Heart left ventricle (tissue), 16 donors: ENCODE measurements at regions of chr15 and their contacts with region 1.

Region 1: DNA sequence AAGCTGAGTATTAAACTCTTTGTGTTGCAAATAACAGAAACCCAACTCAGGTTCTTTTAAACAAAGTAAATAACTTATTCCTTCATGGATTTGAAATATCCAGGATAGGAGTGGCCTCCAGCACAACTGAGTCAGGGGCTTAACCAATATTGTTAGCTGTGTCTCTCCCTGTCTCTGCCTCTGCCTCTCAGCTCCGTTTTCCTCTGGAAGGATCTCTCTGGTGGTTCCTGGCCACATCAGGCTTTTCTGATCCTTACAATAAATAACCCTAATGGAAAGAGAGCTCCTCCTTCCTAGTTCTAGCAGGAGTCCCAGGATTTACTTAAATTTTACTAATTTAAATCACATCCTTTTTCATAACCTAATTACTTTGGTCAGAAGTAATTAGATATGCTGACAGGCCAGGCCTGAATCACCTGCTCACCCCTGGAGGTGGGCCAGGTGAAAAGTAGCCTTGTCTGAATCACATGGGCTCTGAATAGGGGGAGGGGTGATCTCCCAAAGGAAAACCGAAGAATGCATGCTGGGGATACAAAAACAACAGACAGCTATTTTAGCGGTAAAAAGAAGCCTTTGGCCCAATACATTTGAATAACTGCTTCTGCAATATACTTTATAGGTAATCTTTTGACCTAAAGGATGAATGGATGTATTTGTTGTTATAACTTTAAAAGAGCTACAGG is 75.4 kb downstream of the REC114 start:
- DNase-seq: peak in 4 of 5 donors; percentile 18 to 50 (median 24)
- ATAC-seq: peak in 2 of 4 donors; percentile 54 to 63
- H3K4me3 ChIP-seq: no peak overlapping the region
- H3K27ac ChIP-seq: peak overlapping the region in 11 of 12 donors; percentile 21 to 79 (median 71)
- H3K4me1 ChIP-seq: peaks cover 0 to 23% (median 7%) of the 10 kb centered on the region in 12 donors
- H3K27me3 ChIP-seq: no peaks in the 10 kb centered on the region
- CTCF ChIP-seq: no peak
- POLR2A ChIP-seq: no peak

Region 2: GRCh38 chr15:73375755-73376305 is 142.5 kb before region 1 on chr15:
- intact Hi-C with region 1: loop called in 2 of 10 experiments (anchors 2 to 10 kb)
- DNase-seq: peak in 4 of 5 donors; percentile 38 to 81 (median 58)
- ATAC-seq: peak in 3 of 4 donors; percentile 45 to 60 (median 54)
- H3K4me3 ChIP-seq: no peak overlapping the region
- H3K27ac ChIP-seq: peak overlapping the region in 9 of 12 donors; percentile 39 to 77 (median 68)
- H3K4me1 ChIP-seq: peaks cover 0 to 23% (median 6%) of the 10 kb centered on the region in 12 donors
- H3K27me3 ChIP-seq: peaks cover 0 to 19% (median 0%) of the 10 kb centered on the region in 9 donors
- CTCF ChIP-seq: no peak
- POLR2A ChIP-seq: no peak

Region 3: DNA sequence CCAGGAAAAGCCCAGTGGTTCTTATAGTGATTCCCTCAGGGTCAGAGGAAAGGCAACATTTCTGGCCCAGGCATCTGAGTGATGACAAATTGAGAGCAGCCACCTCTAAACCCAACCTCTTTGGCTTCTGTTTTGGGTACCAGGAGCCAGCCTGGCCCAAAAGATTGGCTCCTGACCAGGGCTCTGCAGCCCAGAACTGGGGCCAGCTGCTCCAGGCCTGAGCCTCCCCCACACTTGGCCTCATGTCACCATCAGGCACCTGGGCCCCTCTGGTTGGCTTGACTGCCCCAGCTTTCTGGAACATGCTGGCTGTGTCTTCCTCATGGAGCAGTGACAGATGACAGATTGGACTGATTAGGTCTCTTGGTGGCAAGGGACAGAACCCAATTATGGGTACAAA is 123.5 kb before region 1 on chr15:
- intact Hi-C with region 1: loop called in 3 of 10 experiments (anchors 5 to 10 kb)
- DNase-seq: peak; percentile 73 to 84 (median 77)
- ATAC-seq: peak; percentile 94 to 97 (median 96)
- H3K4me3 ChIP-seq: no peak overlapping the region
- H3K27ac ChIP-seq: no peak overlapping the region
- H3K4me1 ChIP-seq: peaks cover 0 to 24% (median 7%) of the 10 kb centered on the region in 12 donors
- H3K27me3 ChIP-seq: peaks cover 0 to 8% (median 0%) of the 10 kb centered on the region in 9 donors
- CTCF ChIP-seq: no peak
- POLR2A ChIP-seq: no peak

Region 4: DNA sequence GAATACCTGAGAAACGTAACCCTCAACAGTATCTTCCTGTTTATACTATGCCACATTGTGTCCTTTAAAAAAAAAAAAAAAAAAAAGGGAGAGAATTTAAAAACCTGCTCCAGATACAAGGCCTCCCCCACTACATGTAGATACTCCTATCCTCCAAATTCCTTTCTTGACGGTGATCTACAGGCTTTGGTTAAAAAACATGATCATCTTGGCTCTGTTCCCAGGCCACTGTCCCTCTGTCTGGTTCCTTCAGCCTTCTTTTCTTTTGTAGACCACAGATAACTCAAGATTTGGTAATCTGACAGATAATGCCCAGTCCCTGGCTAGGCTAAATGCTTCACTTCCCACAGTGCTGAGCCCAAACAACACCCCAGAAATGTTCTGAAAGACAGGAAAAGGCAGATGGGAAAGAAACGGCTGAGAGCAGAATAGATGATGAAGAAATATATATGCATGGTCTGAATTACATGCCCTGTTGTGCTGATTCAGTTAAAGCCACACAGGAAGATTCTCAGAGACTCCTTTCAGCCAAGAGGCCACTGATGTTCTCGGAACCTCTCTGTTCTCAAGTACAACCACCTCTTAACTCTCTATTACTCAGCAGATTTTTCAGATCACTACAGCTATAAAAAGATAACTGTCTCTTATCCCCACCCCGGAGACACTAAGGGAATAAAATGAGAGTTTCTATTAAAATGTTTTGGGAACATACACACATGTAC is 66.5 kb after region 1 on chr15:
- intact Hi-C with region 1: no loop called
- DNase-seq: no peak
- ATAC-seq: no peak
- H3K4me3 ChIP-seq: no peak overlapping the region
- H3K27ac ChIP-seq: peak overlapping the region in 1 of 12 donors; percentile 21
- H3K4me1 ChIP-seq: peaks cover 0 to 11% (median 2%) of the 10 kb centered on the region in 12 donors
- H3K27me3 ChIP-seq: no peaks in the 10 kb centered on the region
- CTCF ChIP-seq: no peak
- POLR2A ChIP-seq: no peak